Common myeloid progenitor, CD34-positive (primary cell): ENCODE measurements at regions of chr7 and their contacts with region 1.

Region 1: GRCh38 chr7:100022665-100023064 is 7.3 kb downstream of the ZKSCAN1 start:
- DNase-seq: no peak
- H3K4me3 ChIP-seq: no peak overlapping the region
- H3K27ac ChIP-seq: peak overlapping the region in 1 of 2 experiments; percentile 39
- H3K4me1 ChIP-seq: peaks cover 0 to 17% (median 6%) of the 10 kb centered on the region in 4 experiments
- H3K27me3 ChIP-seq: no peaks in the 10 kb centered on the region

Region 2: GRCh38 chr7:100038326-100038725 is 15.7 kb after region 1 on chr7:
- CTCF ChIA-PET with region 1: interaction called, 10 read pairs
- POLR2A ChIA-PET with region 1: interaction called, 3 read pairs
- DNase-seq: no peak
- H3K4me3 ChIP-seq: no peak overlapping the region
- H3K27ac ChIP-seq: no peak overlapping the region
- H3K4me1 ChIP-seq: peaks cover 15 to 33% (median 21%) of the 10 kb centered on the region in 4 experiments
- H3K27me3 ChIP-seq: no peaks in the 10 kb centered on the region

Region 3: GRCh38 chr7:100137851-100138760 is 115.4 kb after region 1 on chr7:
- CTCF ChIA-PET with region 1: no interaction called
- POLR2A ChIA-PET with region 1: no interaction called
- DNase-seq: no peak
- H3K4me3 ChIP-seq: no peak overlapping the region
- H3K27ac ChIP-seq: no peak overlapping the region
- H3K4me1 ChIP-seq: peaks cover 2 to 14% (median 8%) of the 10 kb centered on the region in 4 experiments
- H3K27me3 ChIP-seq: no peaks in the 10 kb centered on the region